Thyroid gland (tissue), 4 donors: ENCODE measurements at regions of chr14 and their contacts with region 1.

Region 1: DNA sequence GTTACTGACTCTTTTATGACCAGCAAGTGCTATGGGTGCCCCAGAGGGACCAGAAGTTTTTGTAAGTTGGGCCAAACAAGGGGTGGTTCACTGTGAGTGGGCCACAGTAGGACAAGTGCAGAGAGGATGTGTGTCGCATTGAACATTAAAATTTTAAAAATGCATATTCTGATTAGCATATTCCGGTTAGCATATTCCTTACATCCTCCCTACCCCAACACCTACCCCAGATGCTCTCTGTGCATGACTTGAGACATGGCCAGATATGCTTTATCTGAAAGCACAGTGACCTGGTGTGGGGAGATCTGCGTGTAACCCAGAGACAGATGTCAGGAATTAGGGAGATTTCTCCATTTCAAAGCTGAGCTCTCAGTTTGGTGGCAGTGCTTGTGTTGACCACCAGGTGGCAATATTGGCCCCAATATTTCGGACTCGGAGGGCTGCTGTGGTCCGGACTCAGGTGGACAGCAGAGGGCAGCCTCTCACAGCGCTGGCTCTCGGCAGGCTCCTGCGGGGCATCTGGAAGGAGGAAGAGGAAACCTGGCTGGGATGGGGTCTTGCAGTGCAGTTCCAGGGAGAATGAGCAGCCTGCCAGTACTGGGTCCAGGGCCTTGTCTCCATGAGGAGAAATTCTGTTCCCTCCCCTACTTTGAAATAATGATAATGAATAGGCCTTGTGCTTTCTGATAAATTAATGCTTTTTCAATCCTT is 1.6 kb upstream of the CEBPE start:
- DNase-seq: peak; percentile 88 to 91
- H3K4me3 ChIP-seq: no peak overlapping the region
- H3K27ac ChIP-seq: no peak overlapping the region
- H3K4me1 ChIP-seq: peaks cover 0 to 14% of the 10 kb centered on the region in 2 donors
- H3K27me3 ChIP-seq: no peaks in the 10 kb centered on the region
- CTCF ChIP-seq: peak; percentile 96 to 100 (median 100)
- POLR2A ChIP-seq: no peak

Region 2: DNA sequence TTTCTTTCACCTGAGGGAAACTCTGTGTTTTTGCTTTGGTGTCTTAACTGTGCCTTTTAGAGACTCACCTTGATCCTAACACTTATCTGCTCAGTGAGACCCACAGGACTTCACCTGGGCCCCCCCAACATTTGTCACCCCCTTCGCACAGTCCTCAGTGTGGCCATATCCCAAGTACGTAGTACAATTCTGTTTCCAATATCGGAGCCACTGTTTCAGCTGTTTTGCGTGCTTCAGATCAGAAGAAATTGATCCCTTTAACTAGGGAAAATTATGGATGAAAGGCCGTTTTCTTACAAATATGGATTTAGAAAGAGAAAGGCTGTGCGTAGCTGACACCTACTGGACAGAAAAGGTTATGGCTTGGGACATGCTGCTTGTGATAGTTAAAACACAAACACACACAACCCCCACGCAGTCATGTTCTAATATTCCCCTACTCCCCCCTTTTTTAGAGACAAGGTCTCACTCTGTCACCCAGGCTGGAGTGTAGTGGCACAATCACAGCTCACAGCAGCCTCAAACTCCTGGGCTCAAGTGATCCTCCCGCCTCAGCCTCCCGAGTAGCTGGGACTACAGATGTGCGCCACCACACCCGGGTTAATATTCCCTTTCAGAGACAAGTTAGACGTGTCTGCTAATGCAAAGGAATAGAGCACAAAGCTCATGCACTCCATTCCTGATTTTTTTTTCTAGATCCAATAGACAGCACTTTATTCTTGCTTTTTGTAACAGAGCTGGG is 66.4 kb after region 1 on chr14:
- intact Hi-C with region 1: loop called (anchors 2 kb)
- DNase-seq: peak; percentile 52 to 56
- H3K4me3 ChIP-seq: no peak overlapping the region
- H3K27ac ChIP-seq: no peak overlapping the region
- H3K4me1 ChIP-seq: peaks cover 0 to 4% of the 10 kb centered on the region in 2 donors
- H3K27me3 ChIP-seq: no peaks in the 10 kb centered on the region
- CTCF ChIP-seq: peak; percentile 49 to 99 (median 82)
- POLR2A ChIP-seq: no peak

Region 3: DNA sequence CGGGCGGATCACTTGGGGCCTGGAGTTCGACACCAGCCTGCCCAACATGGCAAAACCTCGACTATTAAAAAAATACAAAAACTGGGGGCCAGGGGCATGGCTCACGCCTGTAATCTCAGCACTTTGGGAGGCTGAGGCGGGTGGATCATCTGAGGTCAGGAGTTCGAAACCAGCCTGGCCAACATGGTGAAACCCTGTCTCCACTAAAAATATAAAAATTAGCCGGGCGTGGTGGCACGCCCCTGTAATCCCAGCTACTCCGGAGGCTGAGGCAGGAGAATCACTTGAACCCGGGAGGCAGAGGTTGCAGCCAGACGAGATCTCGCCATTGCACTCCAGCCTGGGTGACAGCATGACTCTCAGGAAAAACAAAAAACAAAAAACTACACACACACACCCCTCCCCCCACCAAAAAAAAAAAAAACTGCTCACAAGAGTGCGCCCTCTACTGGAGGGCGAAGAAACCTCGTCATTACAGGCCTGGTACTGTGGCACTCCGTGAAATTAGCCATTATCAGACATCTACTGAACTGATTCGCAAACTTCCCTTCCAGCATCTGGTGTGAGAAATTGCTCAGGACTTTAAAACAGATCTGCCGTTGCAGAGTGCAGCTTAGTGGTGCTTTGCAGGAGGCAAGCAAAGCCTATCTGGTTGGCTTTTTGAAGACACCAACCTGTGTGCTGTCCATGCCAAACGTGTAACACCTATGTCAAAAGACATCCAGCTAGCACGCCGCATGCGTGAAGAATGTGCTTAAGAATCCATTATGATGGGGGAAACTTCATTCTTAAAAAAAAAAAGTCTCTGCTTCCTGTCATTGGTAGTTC is 174.3 kb after region 1 on chr14:
- intact Hi-C with region 1: loop called (anchors 10 kb)
- DNase-seq: peak; percentile 40 to 53
- H3K4me3 ChIP-seq: no peak overlapping the region
- H3K27ac ChIP-seq: no peak overlapping the region
- H3K4me1 ChIP-seq: peaks cover 6 to 17% of the 10 kb centered on the region in 2 donors
- H3K27me3 ChIP-seq: no peaks in the 10 kb centered on the region
- CTCF ChIP-seq: peak; percentile 58 to 97 (median 81)
- POLR2A ChIP-seq: no peak

Region 4: DNA sequence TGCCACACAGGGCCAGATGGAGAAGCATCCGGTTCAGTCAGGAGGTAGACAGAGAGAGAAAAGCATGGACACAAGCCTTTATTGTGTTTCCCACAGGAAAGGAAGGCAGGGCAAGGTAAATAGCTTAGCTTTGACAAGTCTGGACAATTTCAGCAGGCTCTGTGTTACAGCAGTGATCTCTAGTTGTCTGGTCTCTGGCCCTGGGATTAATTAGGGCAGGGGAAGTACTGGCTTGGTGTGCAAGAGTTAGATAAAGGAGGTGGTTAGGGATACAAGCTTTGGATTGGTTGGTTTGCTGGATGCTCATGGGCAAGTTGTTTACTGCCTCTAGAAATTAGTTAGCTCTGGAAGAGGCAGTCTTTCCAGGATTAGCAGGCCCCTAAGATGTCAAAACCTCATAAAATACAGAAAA is 333.8 kb after region 1 on chr14:
- intact Hi-C with region 1: no loop called
- DNase-seq: no peak
- H3K4me3 ChIP-seq: no peak overlapping the region
- H3K27ac ChIP-seq: no peak overlapping the region
- H3K4me1 ChIP-seq: peaks cover 0 to 3% of the 10 kb centered on the region in 2 donors
- H3K27me3 ChIP-seq: no peaks in the 10 kb centered on the region
- CTCF ChIP-seq: no peak
- POLR2A ChIP-seq: no peak